Activated naive CD4-positive, alpha-beta T cell treated with anti-CD3 and anti-CD28 coated beads for 36 hours (primary cell): ENCODE measurements at regions of chr2 and their contacts with region 1.

Region 1: DNA sequence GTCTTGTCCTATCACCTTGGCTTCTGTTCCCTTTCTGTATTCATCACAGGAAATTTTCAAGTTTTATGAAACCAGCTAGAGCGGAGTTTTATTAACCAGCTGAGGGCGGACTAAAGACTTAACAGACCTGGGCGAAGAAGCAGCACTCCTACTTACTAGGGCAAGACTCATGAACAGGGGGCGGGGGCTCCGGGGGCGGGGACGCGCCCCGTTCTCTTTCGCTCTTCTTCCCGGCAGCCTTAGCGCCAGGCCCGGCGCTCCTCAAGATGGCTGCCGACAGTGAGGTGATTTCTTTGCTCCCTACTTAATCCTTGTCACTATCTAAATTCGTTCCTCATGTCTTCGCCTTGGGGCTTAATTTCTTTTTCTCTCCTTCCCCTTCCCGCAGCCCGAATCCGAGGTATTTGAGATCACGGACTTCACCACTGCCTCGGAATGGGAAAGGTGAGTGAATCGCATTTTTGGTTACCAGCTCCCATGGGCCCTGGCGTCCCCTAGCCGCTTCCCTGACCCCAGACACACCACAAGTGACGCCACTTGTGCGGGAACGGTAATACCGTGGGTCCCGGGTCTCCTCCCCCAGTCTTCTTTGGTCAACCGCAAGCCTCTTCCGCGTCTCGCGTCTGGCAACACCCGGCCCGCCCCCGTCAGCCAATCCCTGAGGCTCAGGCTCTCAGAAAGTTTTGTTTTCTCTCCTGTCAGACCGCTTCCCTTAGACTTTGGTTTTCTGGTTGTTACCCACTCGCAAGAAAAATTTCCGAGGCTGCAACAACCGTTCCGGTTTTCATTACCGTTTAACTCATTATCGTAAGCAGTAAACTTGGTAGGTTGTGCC is at the start of gene RAB3GAP1:
- DNase-seq: peak; percentile 97
- H3K4me3 Mint-ChIP-seq: peak within 1 kb of the TSS; percentile 99
- H3K27ac Mint-ChIP-seq: peak within 1 kb of the TSS; percentile 100
- H3K4me1 Mint-ChIP-seq: peaks cover 40% of the 10 kb centered on the region
- H3K27me3 Mint-ChIP-seq: no peaks in the 10 kb centered on the region
- total RNA-seq, gene RAB3GAP1: 55.5 to 59.7 TPM

Region 2: GRCh38 chr2:134290358-134290757 is 761.9 kb before region 1 on chr2:
- CTCF ChIA-PET with region 1: no interaction called
- intact Hi-C with region 1: loop called (anchors 10 kb)
- DNase-seq: peak; percentile 30
- H3K4me3 Mint-ChIP-seq: no peak overlapping the region
- H3K27ac Mint-ChIP-seq: no peak overlapping the region
- H3K4me1 Mint-ChIP-seq: peaks cover 24% of the 10 kb centered on the region
- H3K27me3 Mint-ChIP-seq: no peaks in the 10 kb centered on the region

Region 3: GRCh38 chr2:135004005-135004746 is 48.1 kb before region 1 on chr2:
- CTCF ChIA-PET with region 1: interaction called, 4 read pairs
- intact Hi-C with region 1: loop called (anchors 2 kb)
- DNase-seq: peak; percentile 79
- H3K4me3 Mint-ChIP-seq: no peak overlapping the region
- H3K27ac Mint-ChIP-seq: no peak overlapping the region
- H3K4me1 Mint-ChIP-seq: peaks cover 5% of the 10 kb centered on the region
- H3K27me3 Mint-ChIP-seq: peaks cover 12% of the 10 kb centered on the region

Region 4: GRCh38 chr2:135190799-135191198 is 138.5 kb after region 1 on chr2:
- CTCF ChIA-PET with region 1: no interaction called
- intact Hi-C with region 1: no loop called
- DNase-seq: no peak
- H3K4me3 Mint-ChIP-seq: no peak overlapping the region
- H3K27ac Mint-ChIP-seq: no peak overlapping the region
- H3K4me1 Mint-ChIP-seq: no peaks in the 10 kb centered on the region
- H3K27me3 Mint-ChIP-seq: no peaks in the 10 kb centered on the region

Region 5: GRCh38 chr2:135531231-135532228 is 479.3 kb after region 1 on chr2 and contains the start of gene R3HDM1:
- CTCF ChIA-PET with region 1: no interaction called
- intact Hi-C with region 1: loop called (anchors 1 kb)
- DNase-seq: peak; percentile 98
- H3K4me3 Mint-ChIP-seq: no peak within 1 kb of the TSS
- H3K27ac Mint-ChIP-seq: peak within 1 kb of the TSS; percentile 39
- H3K4me1 Mint-ChIP-seq: peaks cover 39% of the 10 kb centered on the region
- H3K27me3 Mint-ChIP-seq: no peaks in the 10 kb centered on the region
- total RNA-seq, gene R3HDM1: 61.9 to 73.1 TPM

Region 6: GRCh38 chr2:135820003-135820618 is 767.9 kb after region 1 on chr2:
- CTCF ChIA-PET with region 1: no interaction called
- intact Hi-C with region 1: loop called (anchors 1 kb)
- DNase-seq: peak; percentile 94
- H3K4me3 Mint-ChIP-seq: peak overlapping the region; percentile 64
- H3K27ac Mint-ChIP-seq: peak overlapping the region; percentile 79
- H3K4me1 Mint-ChIP-seq: peaks cover 48% of the 10 kb centered on the region
- H3K27me3 Mint-ChIP-seq: no peaks in the 10 kb centered on the region

Region 7: GRCh38 chr2:136135921-136136906 is 1084.0 kb after region 1 on chr2:
- CTCF ChIA-PET with region 1: no interaction called
- intact Hi-C with region 1: loop called (anchors 2 kb)
- DNase-seq: peak; percentile 78
- H3K4me3 Mint-ChIP-seq: no peak overlapping the region
- H3K27ac Mint-ChIP-seq: peak overlapping the region; percentile 79
- H3K4me1 Mint-ChIP-seq: peaks cover 94% of the 10 kb centered on the region
- H3K27me3 Mint-ChIP-seq: peaks cover 25% of the 10 kb centered on the region